ENCODE measurements at regions of chr12 and their contacts with region 1.

Region 1: DNA sequence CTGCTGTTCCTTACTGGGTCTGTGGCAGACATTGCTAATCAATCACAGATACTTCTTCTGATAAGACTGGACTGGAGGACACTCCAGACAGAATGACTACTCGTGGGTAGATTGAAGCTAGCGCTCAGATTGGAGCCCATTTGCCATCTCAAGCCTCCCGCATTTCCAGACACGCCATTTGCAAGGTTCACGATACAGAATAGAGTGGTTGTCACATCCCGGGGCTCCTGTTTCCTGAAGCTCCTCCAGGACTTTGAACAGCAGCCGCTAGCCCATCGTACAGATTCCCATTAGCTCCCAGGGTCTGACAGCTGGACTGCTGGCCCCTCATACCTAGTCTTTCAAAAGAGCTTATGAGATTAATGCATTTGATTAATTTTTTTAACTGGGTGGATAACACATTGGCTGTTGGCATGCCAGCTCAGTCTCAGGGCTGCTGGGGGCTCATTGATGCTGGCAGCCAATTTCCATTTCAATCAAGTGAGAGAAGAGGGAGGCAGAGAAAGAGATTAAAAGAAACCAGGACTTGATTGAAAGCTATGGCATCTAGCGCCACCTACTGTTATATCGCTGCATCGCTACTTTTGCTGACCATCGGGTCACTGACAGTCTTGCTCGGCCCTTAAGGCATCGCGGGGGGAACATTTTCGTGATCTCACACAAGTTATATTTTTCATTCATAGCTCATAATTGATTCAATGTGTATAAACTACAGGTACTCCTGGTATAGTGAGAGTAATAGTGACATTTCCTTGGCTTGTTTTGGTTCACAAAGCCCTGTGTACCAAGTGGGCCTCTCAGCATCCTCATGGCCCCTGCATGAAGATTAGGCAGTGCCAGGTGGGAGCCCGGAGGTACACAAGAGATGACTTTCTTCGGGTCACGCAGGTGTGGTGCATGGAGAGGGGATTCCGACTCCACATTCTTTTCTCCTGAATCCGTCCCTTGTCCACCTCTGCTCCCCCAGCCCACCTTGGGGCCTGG is 78.6 kb downstream of the CCDC60 start:
- DNase-seq: peak; percentile 55
- H3K4me3 Mint-ChIP-seq: no peak overlapping the region
- H3K27ac Mint-ChIP-seq: no peak overlapping the region
- H3K4me1 Mint-ChIP-seq: no peaks in the 10 kb centered on the region
- H3K27me3 Mint-ChIP-seq: peaks cover 3% of the 10 kb centered on the region

Region 2: GRCh38 chr12:119399301-119399700 is 13.8 kb before region 1 on chr12:
- CTCF ChIA-PET with region 1: interaction called, 13 read pairs
- POLR2A ChIA-PET with region 1: no interaction called
- intact Hi-C with region 1: no loop called
- DNase-seq: no peak
- H3K4me3 Mint-ChIP-seq: no peak overlapping the region
- H3K27ac Mint-ChIP-seq: no peak overlapping the region
- H3K4me1 Mint-ChIP-seq: no peaks in the 10 kb centered on the region
- H3K27me3 Mint-ChIP-seq: no peaks in the 10 kb centered on the region

Region 3: DNA sequence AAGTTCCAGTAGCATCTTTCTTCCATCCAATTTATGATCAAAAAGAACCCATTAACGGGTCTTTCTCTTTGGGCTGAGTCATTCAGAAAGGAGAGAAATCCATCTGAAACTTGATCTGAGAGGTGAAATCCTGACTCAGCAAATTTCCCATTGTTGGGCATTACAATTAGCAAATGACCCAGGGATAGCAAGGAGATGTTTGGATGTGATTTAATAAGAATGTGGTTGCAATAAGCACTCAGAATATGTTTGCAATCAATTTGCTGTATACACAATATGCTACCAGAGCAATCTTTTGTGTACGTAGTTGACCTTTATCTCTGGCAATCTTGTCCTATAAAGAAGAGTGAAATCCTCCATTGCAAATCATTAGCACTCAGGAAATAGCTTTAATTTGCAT is 44.2 kb after region 1 on chr12:
- CTCF ChIA-PET with region 1: no interaction called
- POLR2A ChIA-PET with region 1: no interaction called
- intact Hi-C with region 1: no loop called
- DNase-seq: no peak
- H3K4me3 Mint-ChIP-seq: no peak overlapping the region
- H3K27ac Mint-ChIP-seq: no peak overlapping the region
- H3K4me1 Mint-ChIP-seq: no peaks in the 10 kb centered on the region
- H3K27me3 Mint-ChIP-seq: peaks cover 9% of the 10 kb centered on the region

Region 4: GRCh38 chr12:119556854-119557253 is 143.8 kb after region 1 on chr12:
- CTCF ChIA-PET with region 1: no interaction called
- POLR2A ChIA-PET with region 1: no interaction called
- intact Hi-C with region 1: no loop called
- DNase-seq: no peak
- H3K4me3 Mint-ChIP-seq: no peak overlapping the region
- H3K27ac Mint-ChIP-seq: no peak overlapping the region
- H3K4me1 Mint-ChIP-seq: no peaks in the 10 kb centered on the region
- H3K27me3 Mint-ChIP-seq: peaks cover 14% of the 10 kb centered on the region